Colonic mucosa (tissue), 4 donors: ENCODE measurements at regions of chr2 and their contacts with region 1.

Region 1: GRCh38 chr2:75646583-75647425 is at the start of gene MRPL19:
- DNase-seq: peak; percentile 92
- H3K4me3 ChIP-seq: peak within 1 kb of the TSS; percentile 55
- H3K27ac ChIP-seq: peak within 1 kb of the TSS; percentile 22
- H3K4me1 ChIP-seq: peaks cover 3% of the 10 kb centered on the region
- H3K27me3 ChIP-seq: no peaks in the 10 kb centered on the region
- CTCF ChIP-seq: no peak
- total RNA-seq, gene MRPL19: 58.3 to 62.0 TPM

Region 2: DNA sequence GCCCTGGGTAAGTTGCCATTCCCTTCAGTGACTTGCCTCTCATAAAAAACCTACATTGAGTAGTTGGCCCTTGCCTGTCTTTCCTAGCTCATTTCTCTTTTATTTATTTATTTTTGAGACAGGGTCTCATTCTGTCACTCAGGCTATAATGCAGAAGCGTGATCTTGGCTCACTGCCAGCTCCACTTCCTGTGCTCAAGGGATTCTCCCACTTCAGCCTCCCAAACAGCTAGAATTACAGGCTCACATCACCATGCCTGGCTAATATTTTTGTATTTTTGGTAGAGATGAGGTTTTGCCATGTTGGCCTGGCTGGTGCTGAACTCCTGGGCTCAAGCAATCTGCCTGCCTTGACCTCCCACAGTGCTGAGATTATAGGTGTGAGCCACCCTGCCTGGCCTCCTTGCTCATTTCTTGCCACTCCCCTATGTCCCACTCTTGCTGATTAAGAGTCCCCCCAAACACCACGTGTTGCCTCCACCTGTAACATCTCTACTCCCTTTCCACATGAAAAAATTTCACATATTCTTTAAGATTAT is 98.7 kb before region 1 on chr2:
- intact Hi-C with region 1: no loop called
- DNase-seq: no peak
- H3K4me3 ChIP-seq: no peak overlapping the region
- H3K27ac ChIP-seq: no peak overlapping the region
- H3K4me1 ChIP-seq: no peaks in the 10 kb centered on the region
- H3K27me3 ChIP-seq: no peaks in the 10 kb centered on the region
- CTCF ChIP-seq: no peak

Region 3: GRCh38 chr2:75608684-75609333 is 38.0 kb before region 1 on chr2:
- intact Hi-C with region 1: no loop called
- DNase-seq: peak; percentile 36
- H3K4me3 ChIP-seq: no peak overlapping the region
- H3K27ac ChIP-seq: no peak overlapping the region
- H3K4me1 ChIP-seq: no peaks in the 10 kb centered on the region
- H3K27me3 ChIP-seq: no peaks in the 10 kb centered on the region
- CTCF ChIP-seq: peak; percentile 90

Region 4: DNA sequence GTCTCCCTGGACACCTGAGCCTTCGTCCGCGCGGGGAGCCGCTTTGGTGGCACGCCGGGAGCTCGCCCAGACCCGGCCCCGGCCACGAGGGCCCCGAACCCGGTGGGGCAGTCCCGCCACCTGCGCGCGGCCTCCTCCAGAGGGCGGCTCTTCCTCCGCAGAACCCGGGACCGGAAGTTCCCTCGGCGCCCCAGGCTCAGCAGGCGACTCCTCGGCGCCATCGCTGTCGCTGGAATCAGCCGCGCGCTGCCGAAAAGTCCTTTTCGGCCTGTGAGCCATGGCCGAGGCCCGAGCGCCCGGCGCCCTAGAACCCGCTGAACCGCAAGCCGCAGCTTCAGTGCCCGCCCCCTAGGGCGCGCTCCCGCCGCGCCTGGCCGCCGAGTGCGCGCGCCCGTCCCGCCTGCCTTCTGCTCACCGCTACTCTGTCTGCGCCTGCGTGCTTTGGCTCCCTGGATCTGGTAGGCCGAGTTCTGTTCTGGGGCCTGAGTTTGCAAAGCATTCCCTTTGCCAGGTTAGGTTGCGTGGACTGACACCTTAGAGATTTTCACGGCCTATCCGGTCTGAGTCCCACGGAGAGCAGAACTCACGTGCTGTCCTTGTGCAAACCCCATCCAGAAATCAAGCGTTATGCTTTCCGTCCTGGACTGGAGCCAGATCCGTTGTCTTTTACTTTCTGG is 63.9 kb after region 1 on chr2 and contains the start of gene GCFC2:
- intact Hi-C with region 1: loop called (anchors 5 kb)
- DNase-seq: peak; percentile 88
- H3K4me3 ChIP-seq: peak within 1 kb of the TSS; percentile 79
- H3K27ac ChIP-seq: peak within 1 kb of the TSS; percentile 95
- H3K4me1 ChIP-seq: peaks cover 10% of the 10 kb centered on the region
- H3K27me3 ChIP-seq: no peaks in the 10 kb centered on the region
- CTCF ChIP-seq: no peak
- total RNA-seq, gene GCFC2: 10.0 to 13.5 TPM

Region 5: DNA sequence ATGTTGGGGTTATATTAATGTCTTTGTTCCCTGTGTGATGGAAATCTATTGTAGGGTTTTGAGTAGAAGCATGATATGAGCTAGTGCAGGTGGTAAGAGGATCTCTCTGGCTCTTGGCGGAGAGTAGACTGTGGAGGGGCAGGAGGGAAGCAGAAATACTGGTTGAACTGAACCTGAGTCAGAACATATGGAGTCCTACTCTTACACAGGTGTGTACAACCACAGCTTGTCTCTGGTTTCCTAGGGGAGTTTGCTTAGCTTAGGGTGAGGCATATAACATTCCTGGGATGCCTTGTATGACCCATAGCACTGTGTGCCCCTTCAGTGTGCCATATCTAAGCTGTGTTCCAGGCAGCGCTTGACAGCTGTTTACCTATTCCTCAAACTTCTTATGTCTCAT is 161.2 kb after region 1 on chr2:
- intact Hi-C with region 1: no loop called
- DNase-seq: no peak
- H3K4me3 ChIP-seq: no peak overlapping the region
- H3K27ac ChIP-seq: no peak overlapping the region
- H3K4me1 ChIP-seq: no peaks in the 10 kb centered on the region
- H3K27me3 ChIP-seq: no peaks in the 10 kb centered on the region
- CTCF ChIP-seq: no peak